Right ventricle myocardium inferior (tissue), 1 donor: ENCODE measurements at regions of chrX and their contacts with region 1.

Region 1: GRCh38 chrX:110002300-110003166 is at the start of gene TMEM164:
- DNase-seq: peak; percentile 93
- ATAC-seq: peak; percentile 95
- total RNA-seq, gene TMEM164: 53.6 TPM

Region 2: GRCh38 chrX:109911046-109911445 is 91.5 kb before region 1 on chrX:
- intact Hi-C with region 1: no loop called
- DNase-seq: no peak
- ATAC-seq: no peak

Region 3: GRCh38 chrX:109927663-109928273 is 74.8 kb before region 1 on chrX:
- intact Hi-C with region 1: loop called (anchors 5 kb)
- DNase-seq: no peak
- ATAC-seq: peak; percentile 78

Region 4: GRCh38 chrX:110046001-110046400 is 43.5 kb after region 1 on chrX:
- intact Hi-C with region 1: loop called (anchors 5 kb)
- DNase-seq: no peak
- ATAC-seq: peak; percentile 43

Region 5: GRCh38 chrX:110657073-110657472 is 654.5 kb after region 1 on chrX:
- intact Hi-C with region 1: no loop called
- DNase-seq: no peak
- ATAC-seq: no peak